T-cell (primary cell): ENCODE measurements at regions of chr6 and their contacts with region 1.

Region 1: DNA sequence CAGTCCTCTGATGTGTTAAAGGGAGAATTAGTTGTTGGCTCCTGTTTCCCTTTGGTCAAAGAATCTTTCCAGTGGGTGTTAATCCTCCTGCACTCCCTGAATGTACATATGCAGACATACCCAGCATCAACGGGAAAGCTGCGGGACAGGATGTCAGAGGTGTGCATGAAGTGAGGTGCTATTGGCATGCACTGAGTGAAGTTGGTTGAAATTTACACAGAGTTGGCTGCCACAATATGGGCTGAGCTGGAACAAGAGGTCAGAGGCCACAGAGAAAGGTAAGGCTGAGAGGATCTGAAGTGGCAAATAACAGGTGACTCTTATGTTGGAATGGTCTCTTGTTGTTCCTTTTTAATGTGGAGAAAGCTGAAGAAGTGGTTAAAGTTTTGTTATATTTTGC is 82.7 kb upstream of the AKIRIN2 start:
- DNase-seq: no peak
- ATAC-seq: no peak
- H3K4me3 ChIP-seq: no peak overlapping the region
- H3K4me3 Mint-ChIP-seq: no peak overlapping the region
- H3K27ac ChIP-seq: no peak overlapping the region
- H3K27ac Mint-ChIP-seq: no peak overlapping the region
- H3K4me1 ChIP-seq: no peaks in the 10 kb centered on the region
- H3K4me1 Mint-ChIP-seq: no peaks in the 10 kb centered on the region
- H3K27me3 ChIP-seq: no peaks in the 10 kb centered on the region
- H3K27me3 Mint-ChIP-seq: peaks cover 0 to 7% of the 10 kb centered on the region in 2 donors

Region 2: GRCh38 chr6:87431273-87431672 is 353.4 kb before region 1 on chr6:
- CTCF ChIA-PET with region 1: no interaction called
- POLR2A ChIA-PET with region 1: no interaction called
- DNase-seq: no peak
- ATAC-seq: no peak
- H3K4me3 ChIP-seq: no peak overlapping the region
- H3K4me3 Mint-ChIP-seq: no peak overlapping the region
- H3K27ac ChIP-seq: no peak overlapping the region
- H3K27ac Mint-ChIP-seq: no peak overlapping the region
- H3K4me1 ChIP-seq: no peaks in the 10 kb centered on the region
- H3K4me1 Mint-ChIP-seq: no peaks in the 10 kb centered on the region
- H3K27me3 ChIP-seq: peaks cover 0 to 4% of the 10 kb centered on the region in 2 experiments
- H3K27me3 Mint-ChIP-seq: peaks cover 13 to 18% of the 10 kb centered on the region in 2 donors

Region 3: DNA sequence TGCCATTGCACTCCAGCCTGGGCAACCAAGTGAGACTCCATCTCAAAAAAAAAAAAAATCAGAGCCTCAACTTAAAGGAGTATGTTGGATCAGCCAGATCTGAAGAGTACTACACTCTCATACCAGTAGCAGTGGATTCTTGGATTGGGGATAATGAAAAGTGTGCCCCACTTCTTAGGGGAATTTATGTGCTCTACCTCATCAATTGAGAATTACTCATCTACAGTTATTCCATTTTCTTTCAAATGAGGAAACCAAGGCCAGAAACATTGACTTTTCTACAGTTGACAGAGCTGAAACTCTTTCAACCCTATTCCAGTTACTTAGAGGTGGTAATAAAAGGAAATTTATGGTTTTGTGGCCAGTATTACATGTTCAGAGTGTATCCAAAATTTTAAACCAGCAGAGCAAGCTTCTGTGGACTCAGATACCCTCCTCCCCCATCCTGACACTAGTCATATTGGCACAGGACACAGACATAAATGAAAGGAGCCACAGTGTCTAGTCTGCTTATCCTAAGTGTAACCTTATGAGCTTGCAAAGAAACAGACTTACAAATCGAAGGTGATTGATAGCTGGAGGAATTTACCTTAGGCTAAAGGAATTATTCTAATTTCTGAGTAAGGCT is 143.5 kb before region 1 on chr6:
- CTCF ChIA-PET with region 1: no interaction called
- POLR2A ChIA-PET with region 1: no interaction called
- DNase-seq: no peak
- ATAC-seq: no peak
- H3K4me3 ChIP-seq: no peak overlapping the region
- H3K4me3 Mint-ChIP-seq: no peak overlapping the region
- H3K27ac ChIP-seq: no peak overlapping the region
- H3K27ac Mint-ChIP-seq: no peak overlapping the region
- H3K4me1 ChIP-seq: peaks cover 3 to 5% of the 10 kb centered on the region in 2 experiments
- H3K4me1 Mint-ChIP-seq: peaks cover 0 to 14% (median 12%) of the 10 kb centered on the region in 3 donors
- H3K27me3 ChIP-seq: no peaks in the 10 kb centered on the region
- H3K27me3 Mint-ChIP-seq: no peaks in the 10 kb centered on the region

Region 4: GRCh38 chr6:87682310-87682709 is 102.4 kb before region 1 on chr6:
- CTCF ChIA-PET with region 1: no interaction called
- POLR2A ChIA-PET with region 1: interaction called in 1 of 2 experiments, 10 read pairs
- DNase-seq: no peak
- ATAC-seq: peak in 1 of 4 experiments; percentile 26
- H3K4me3 ChIP-seq: no peak overlapping the region
- H3K4me3 Mint-ChIP-seq: no peak overlapping the region
- H3K27ac ChIP-seq: peak overlapping the region; percentile 28
- H3K27ac Mint-ChIP-seq: peak overlapping the region; percentile 72 to 74
- H3K4me1 ChIP-seq: peaks cover 0 to 18% of the 10 kb centered on the region in 2 experiments
- H3K4me1 Mint-ChIP-seq: peaks cover 51 to 76% (median 67%) of the 10 kb centered on the region in 3 donors
- H3K27me3 ChIP-seq: no peaks in the 10 kb centered on the region
- H3K27me3 Mint-ChIP-seq: no peaks in the 10 kb centered on the region

Region 5: GRCh38 chr6:87756858-87757257 is 27.8 kb before region 1 on chr6:
- CTCF ChIA-PET with region 1: no interaction called
- POLR2A ChIA-PET with region 1: no interaction called
- DNase-seq: peak in 15 of 35 experiments; percentile 0 to 47 (median 4)
- ATAC-seq: peak; percentile 35 to 66 (median 54)
- H3K4me3 ChIP-seq: no peak overlapping the region
- H3K4me3 Mint-ChIP-seq: no peak overlapping the region
- H3K27ac ChIP-seq: no peak overlapping the region
- H3K27ac Mint-ChIP-seq: no peak overlapping the region
- H3K4me1 ChIP-seq: peaks cover 0 to 6% of the 10 kb centered on the region in 2 experiments
- H3K4me1 Mint-ChIP-seq: peaks cover 0 to 17% (median 8%) of the 10 kb centered on the region in 3 donors
- H3K27me3 ChIP-seq: no peaks in the 10 kb centered on the region
- H3K27me3 Mint-ChIP-seq: peaks cover 3% of the 10 kb centered on the region in 2 donors

Region 6: GRCh38 chr6:88044530-88044929 is 259.8 kb after region 1 on chr6:
- CTCF ChIA-PET with region 1: no interaction called
- POLR2A ChIA-PET with region 1: no interaction called
- DNase-seq: no peak
- ATAC-seq: no peak
- H3K4me3 ChIP-seq: no peak overlapping the region
- H3K4me3 Mint-ChIP-seq: no peak overlapping the region
- H3K27ac ChIP-seq: no peak overlapping the region
- H3K27ac Mint-ChIP-seq: no peak overlapping the region
- H3K4me1 ChIP-seq: no peaks in the 10 kb centered on the region
- H3K4me1 Mint-ChIP-seq: peaks cover 0 to 2% (median 0%) of the 10 kb centered on the region in 3 donors
- H3K27me3 ChIP-seq: peaks cover 0 to 2% of the 10 kb centered on the region in 2 experiments
- H3K27me3 Mint-ChIP-seq: peaks cover 20 to 24% of the 10 kb centered on the region in 2 donors